Naive thymus-derived CD4-positive, alpha-beta T cell (primary cell): ENCODE measurements at regions of chr4 and their contacts with region 1.

Region 1: DNA sequence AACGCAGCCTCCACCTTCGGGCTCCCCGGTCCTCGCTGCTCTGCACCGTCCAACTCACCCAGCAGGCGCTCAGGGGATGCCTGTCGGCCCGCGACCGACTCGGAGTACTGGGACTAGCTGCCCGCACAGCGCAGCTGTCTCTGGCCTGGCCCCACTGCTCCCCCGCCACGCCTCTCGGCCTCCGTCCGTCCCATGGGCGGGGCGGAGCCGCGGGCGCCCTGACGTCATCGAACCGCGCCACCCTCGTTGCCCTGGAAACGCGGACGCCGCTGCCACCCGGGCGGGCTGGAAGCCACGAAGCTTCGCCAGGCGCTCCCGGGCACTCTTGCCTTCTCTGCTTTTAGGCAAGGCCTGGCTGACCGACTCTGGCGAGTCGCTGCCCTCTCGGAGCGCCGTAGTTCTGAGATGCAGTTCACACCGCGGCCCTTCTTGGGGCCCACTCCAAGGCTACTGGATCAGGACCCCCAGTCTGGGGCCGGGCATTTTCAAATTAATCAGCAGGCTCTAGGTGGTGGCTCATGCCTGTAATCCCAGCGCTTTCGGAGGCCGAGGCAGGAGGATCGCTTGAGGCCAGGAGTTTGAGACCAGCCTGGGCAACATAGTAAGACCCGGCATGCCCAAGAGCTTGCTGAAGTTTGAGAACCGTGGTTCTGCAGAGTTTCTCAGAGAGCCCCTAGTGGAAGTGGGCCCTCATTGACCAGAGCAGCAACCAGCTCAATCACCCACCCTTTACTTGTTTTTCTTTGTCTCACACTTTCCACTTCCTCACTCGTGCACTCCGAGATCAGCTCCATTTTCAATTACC is 12.0 kb downstream of the ACOX3 start:
- DNase-seq: peak; percentile 81 to 99 (median 91)
- ATAC-seq: peak; percentile 99
- H3K4me3 ChIP-seq: peak overlapping the region; percentile 95
- H3K4me3 Mint-ChIP-seq: peak overlapping the region; percentile 85 to 98 (median 95)
- H3K27ac ChIP-seq: peak overlapping the region; percentile 84
- H3K27ac Mint-ChIP-seq: peak overlapping the region; percentile 69 to 94 (median 92)
- H3K4me1 ChIP-seq: peaks cover 13 to 17% of the 10 kb centered on the region in 2 donors
- H3K4me1 Mint-ChIP-seq: peaks cover 15 to 54% (median 48%) of the 10 kb centered on the region in 7 donors
- H3K27me3 ChIP-seq: no peaks in the 10 kb centered on the region
- H3K27me3 Mint-ChIP-seq: no peaks in the 10 kb centered on the region

Region 2: DNA sequence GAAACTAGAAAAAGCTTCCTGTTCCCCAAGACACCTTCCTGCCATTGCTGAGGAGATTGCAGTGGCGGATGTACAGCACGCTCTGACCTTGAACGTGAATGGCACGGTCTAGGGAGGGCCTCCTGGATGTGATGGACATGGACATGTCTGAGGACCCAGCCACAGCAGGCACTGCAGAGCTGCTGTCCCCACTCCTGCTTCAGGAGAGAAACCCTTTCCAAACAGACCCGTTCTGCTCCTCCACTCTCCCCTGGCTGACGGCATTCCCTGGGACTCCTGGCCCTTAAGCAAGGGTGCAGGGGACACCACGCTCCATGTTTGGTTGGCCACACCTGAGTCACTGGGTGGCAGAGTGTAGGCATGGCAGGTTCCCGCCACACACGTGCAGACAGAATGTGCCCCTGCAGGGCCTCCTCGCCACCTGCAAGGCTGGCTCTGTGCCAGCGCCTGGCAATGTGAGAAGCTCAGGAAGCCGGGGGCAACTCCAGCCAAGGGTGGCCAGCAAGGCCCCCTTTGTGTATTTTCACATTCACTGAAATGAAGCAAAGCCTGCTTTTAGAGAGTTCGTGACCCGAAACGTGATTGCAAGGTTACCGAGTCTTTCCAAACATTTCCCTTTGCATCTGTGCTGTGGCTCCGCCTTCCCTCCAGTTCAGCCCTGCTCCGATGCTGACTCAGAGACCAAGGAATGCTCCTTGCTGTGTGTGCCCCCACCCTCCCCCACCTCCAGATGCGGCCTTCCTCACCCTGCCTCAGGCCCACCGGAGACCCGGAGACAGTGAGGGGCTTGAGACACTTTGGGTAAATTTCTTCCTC is 112.9 kb before region 1 on chr4:
- CTCF ChIA-PET with region 1: no interaction called
- POLR2A ChIA-PET with region 1: no interaction called
- intact Hi-C with region 1: no loop called
- DNase-seq: peak in 1 of 9 donors; percentile 9
- ATAC-seq: no peak
- H3K4me3 ChIP-seq: no peak overlapping the region
- H3K4me3 Mint-ChIP-seq: no peak overlapping the region
- H3K27ac ChIP-seq: no peak overlapping the region
- H3K27ac Mint-ChIP-seq: no peak overlapping the region
- H3K4me1 ChIP-seq: no peaks in the 10 kb centered on the region
- H3K4me1 Mint-ChIP-seq: no peaks in the 10 kb centered on the region
- H3K27me3 ChIP-seq: no peaks in the 10 kb centered on the region
- H3K27me3 Mint-ChIP-seq: peaks cover 2 to 22% (median 8%) of the 10 kb centered on the region in 5 donors

Region 3: GRCh38 chr4:8440492-8441341 is 12.2 kb after region 1 on chr4 and contains the starts of genes ACOX3 and TRMT44:
- CTCF ChIA-PET with region 1: interaction called, 3 read pairs
- POLR2A ChIA-PET with region 1: interaction called, 28 read pairs
- intact Hi-C with region 1: loop called (anchors 1 kb)
- DNase-seq: peak; percentile 89 to 100 (median 97)
- ATAC-seq: peak; percentile 97
- H3K4me3 ChIP-seq: peak within 1 kb of the TSS; percentile 92
- H3K4me3 Mint-ChIP-seq: peak within 1 kb of the TSS; percentile 93 to 100 (median 96)
- H3K27ac ChIP-seq: peak within 1 kb of the TSS; percentile 89
- H3K27ac Mint-ChIP-seq: peak within 1 kb of the TSS; percentile 98 to 100 (median 99)
- H3K4me1 ChIP-seq: peaks cover 31 to 37% of the 10 kb centered on the region in 2 donors
- H3K4me1 Mint-ChIP-seq: peaks cover 62 to 89% (median 81%) of the 10 kb centered on the region in 7 donors
- H3K27me3 ChIP-seq: no peaks in the 10 kb centered on the region
- H3K27me3 Mint-ChIP-seq: peaks cover 0 to 2% (median 0%) of the 10 kb centered on the region in 5 donors
- total RNA-seq, gene ACOX3: 10.9 to 20.5 (median 14.8) TPM
- total RNA-seq, gene TRMT44: 28.5 to 33.7 (median 29.6) TPM

Region 4: DNA sequence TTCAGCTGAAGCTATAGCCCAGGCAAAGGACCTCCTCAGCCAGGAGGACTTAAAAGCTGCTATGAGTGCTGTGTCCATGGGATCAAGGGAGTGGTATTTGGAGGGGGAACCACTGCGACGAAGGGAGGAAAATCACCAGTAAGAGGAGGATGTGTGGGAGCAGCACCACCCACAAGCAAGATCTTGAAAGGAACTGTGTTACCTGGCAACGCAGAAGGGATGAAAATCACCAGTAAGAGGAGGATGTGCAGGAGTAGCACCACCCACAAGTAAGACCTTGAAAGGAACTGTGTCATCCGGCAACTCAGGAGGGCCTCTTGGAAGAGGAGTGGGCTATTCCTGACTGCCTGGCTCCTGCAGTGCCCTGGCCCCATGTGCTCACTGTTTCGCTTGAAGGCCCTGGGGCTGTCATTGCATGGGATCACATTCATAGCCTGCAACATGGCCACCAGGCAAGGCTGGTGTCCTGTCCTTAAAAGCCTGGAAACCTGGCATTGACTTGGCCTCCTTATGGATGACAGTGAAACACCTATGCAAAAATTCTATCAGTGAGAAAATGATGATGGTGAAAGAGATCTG is 60.4 kb after region 1 on chr4:
- CTCF ChIA-PET with region 1: no interaction called
- POLR2A ChIA-PET with region 1: no interaction called
- intact Hi-C with region 1: no loop called
- DNase-seq: no peak
- ATAC-seq: no peak
- H3K4me3 ChIP-seq: no peak overlapping the region
- H3K4me3 Mint-ChIP-seq: no peak overlapping the region
- H3K27ac ChIP-seq: no peak overlapping the region
- H3K27ac Mint-ChIP-seq: no peak overlapping the region
- H3K4me1 ChIP-seq: no peaks in the 10 kb centered on the region
- H3K4me1 Mint-ChIP-seq: peaks cover 0 to 5% (median 0%) of the 10 kb centered on the region in 7 donors
- H3K27me3 ChIP-seq: no peaks in the 10 kb centered on the region
- H3K27me3 Mint-ChIP-seq: no peaks in the 10 kb centered on the region

Region 5: GRCh38 chr4:10045481-10045880 is 1617.0 kb after region 1 on chr4:
- CTCF ChIA-PET with region 1: no interaction called
- POLR2A ChIA-PET with region 1: no interaction called
- intact Hi-C with region 1: no loop called
- DNase-seq: no peak
- ATAC-seq: no peak
- H3K4me3 ChIP-seq: no peak overlapping the region
- H3K4me3 Mint-ChIP-seq: no peak overlapping the region
- H3K27ac ChIP-seq: no peak overlapping the region
- H3K27ac Mint-ChIP-seq: no peak overlapping the region
- H3K4me1 ChIP-seq: no peaks in the 10 kb centered on the region
- H3K4me1 Mint-ChIP-seq: peaks cover 0 to 17% (median 7%) of the 10 kb centered on the region in 7 donors
- H3K27me3 ChIP-seq: no peaks in the 10 kb centered on the region
- H3K27me3 Mint-ChIP-seq: no peaks in the 10 kb centered on the region